IMR-90 (cell line): ENCODE measurements at regions of chr17 and their contacts with region 1.

Region 1: DNA sequence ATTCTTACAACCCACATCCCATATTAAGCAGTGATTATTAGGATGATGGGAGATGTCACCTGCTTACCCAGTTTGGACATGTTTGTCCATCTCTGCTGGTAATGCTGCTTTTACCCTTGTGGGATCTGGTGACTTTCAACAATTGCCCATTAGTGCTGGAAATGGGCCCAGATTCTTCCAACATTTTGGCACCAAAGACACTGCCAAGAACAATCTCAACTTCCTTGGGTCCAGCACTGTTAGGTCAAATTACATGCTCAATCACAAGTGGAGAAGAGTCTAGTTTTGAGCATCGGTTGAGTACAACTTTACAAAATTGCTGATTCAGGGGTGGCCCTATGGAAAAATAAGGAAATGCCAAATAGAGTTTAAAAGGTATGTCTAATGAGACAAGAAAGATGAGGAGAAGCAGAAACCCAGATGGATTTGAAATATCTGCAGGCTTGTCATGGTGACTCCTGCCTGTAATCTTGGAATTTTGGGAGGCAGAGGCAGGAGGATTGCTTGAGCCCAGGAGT is 13.0 kb upstream of the ZFP3 start:
- DNase-seq: no peak
- ATAC-seq: no peak
- H3K4me3 ChIP-seq: no peak overlapping the region
- H3K27ac ChIP-seq: no peak overlapping the region
- H3K4me1 ChIP-seq: no peaks in the 10 kb centered on the region
- H3K27me3 ChIP-seq: peaks cover 7% of the 10 kb centered on the region; the same call in 1 of the 2 replicates
- CTCF ChIP-seq: no peak
- POLR2A ChIP-seq: no peak
- RAD21 ChIP-seq: no peak

Region 2: DNA sequence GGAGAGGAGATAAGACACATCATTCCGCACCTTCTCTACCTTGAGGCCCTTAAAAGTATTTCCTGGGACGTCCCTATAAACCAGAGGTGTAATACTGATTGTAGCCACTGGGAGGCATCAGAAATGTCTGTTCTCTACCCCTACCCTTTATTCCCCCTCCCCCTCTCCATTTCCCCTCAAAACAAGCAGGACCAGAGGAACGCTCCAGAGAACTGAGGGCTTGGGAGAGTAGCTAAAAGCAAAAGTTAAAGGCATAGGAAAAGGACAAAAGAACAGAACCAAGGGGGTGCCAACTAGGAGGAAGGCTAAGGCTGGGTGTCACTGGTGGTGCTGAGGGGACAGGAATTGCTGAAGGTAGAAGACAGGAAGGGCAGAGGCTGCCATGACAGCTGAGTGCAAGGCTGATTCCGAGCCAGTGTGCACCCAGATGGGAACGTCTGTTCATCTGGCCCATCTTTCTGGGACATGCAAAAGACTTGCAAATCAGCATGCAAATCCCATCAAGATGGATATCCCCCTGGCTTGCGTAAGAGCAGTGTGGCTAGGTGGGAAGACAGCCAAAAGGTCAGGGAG is 84.6 kb before region 1 on chr17:
- CTCF ChIA-PET with region 1: interaction called, 3 read pairs
- POLR2A ChIA-PET with region 1: no interaction called
- dilution Hi-C with region 1: no loop called
- in situ Hi-C with region 1: no loop called
- intact Hi-C with region 1: loop called (anchors 1 kb)
- DNase-seq: peak; percentile 46
- ATAC-seq: peak; percentile 90
- H3K4me3 ChIP-seq: no peak overlapping the region
- H3K27ac ChIP-seq: no peak overlapping the region
- H3K4me1 ChIP-seq: peaks cover 3% of the 10 kb centered on the region; the same call in 1 of the 2 replicates
- H3K27me3 ChIP-seq: no peaks in the 10 kb centered on the region
- CTCF ChIP-seq: peak; percentile 67
- POLR2A ChIP-seq: no peak
- RAD21 ChIP-seq: peak; percentile 51

Region 3: DNA sequence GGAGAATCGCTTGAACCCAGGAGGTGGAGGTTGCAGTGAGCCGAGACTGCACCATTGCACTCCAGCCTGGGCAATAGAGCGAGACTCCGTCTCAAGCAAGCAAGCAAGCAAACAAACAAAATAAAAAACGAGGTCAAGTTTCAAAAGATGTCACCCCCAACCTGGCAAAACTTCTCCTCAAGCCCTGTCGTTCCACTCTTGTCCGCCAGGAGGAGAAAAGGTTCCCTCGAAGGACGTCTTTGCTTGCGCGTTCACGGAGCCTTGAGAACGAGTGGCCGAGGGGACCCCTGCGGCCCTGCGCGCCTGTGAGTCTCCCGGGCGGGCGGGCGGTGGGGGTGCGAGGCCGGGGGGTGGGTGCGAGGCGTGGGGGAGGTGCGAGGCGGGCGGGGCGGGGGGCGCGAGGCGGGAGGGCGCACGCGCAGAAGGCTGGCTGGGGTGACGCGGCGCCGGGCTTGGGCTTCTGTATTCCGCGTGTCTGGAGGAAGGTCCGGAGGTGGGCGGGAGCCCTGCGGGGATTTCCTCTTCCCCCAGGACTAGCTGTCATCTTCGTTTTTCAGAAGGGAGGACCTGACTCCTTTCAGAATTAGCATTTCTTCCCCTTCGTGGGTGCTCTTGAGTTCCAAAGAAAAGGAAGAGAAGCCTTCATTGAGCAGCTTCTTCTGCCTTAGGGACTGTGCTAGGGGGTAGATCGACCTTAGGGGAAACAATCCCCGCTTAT is 33.8 kb before region 1 on chr17:
- CTCF ChIA-PET with region 1: interaction called, 10 read pairs
- POLR2A ChIA-PET with region 1: no interaction called
- dilution Hi-C with region 1: no loop called
- in situ Hi-C with region 1: no loop called
- intact Hi-C with region 1: loop called (anchors 1 kb)
- DNase-seq: peak; percentile 73
- ATAC-seq: peak; percentile 86
- H3K4me3 ChIP-seq: peak overlapping the region; percentile 38
- H3K27ac ChIP-seq: no peak overlapping the region
- H3K4me1 ChIP-seq: no peaks in the 10 kb centered on the region
- H3K27me3 ChIP-seq: peaks cover 8% of the 10 kb centered on the region
- CTCF ChIP-seq: peak; percentile 73
- POLR2A ChIP-seq: no peak
- RAD21 ChIP-seq: peak; percentile 54

Region 4: GRCh38 chr17:5675625-5676421 is 610.5 kb after region 1 on chr17:
- CTCF ChIA-PET with region 1: no interaction called
- POLR2A ChIA-PET with region 1: no interaction called
- dilution Hi-C with region 1: no loop called
- in situ Hi-C with region 1: no loop called
- intact Hi-C with region 1: no loop called
- DNase-seq: no peak
- ATAC-seq: no peak
- H3K4me3 ChIP-seq: no peak overlapping the region
- H3K27ac ChIP-seq: no peak overlapping the region
- H3K4me1 ChIP-seq: no peaks in the 10 kb centered on the region
- H3K27me3 ChIP-seq: no peaks in the 10 kb centered on the region
- CTCF ChIP-seq: no peak
- POLR2A ChIP-seq: no peak
- RAD21 ChIP-seq: no peak